ENCODE measurements at regions of chr12 and their contacts with region 1.

Region 1: DNA sequence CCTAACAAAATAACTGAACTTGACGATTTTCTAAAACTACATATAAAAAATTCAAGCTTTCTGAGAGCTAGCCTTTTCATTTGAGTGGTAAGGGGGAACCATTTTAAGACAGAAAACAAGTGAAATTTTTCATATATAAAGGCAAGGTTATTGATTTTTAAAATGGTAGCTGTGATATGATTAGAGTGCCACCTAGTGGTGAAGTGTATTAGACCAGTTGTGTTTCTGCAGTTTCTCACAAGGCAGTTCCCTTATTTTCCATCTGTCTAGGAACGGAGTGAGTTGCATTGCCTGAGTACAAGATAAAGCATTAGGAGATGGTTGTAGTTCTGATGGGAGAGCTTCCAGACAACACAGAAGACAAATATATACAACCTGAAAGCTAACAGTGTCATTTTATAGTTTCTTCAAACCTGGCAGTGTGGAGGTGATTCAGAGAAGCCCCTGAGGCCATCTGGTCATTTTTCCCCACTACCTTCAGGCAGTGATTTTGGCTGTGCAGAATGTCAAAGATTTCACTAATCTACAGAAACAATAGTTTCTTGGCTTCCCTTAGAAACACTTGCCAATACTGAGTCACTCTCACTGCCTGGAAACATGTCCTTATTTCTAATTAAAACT is 180.8 kb downstream of the C12orf50 start:
- DNase-seq: peak; percentile 18 to 45 (median 22)
- ATAC-seq: no peak
- H3K4me3 ChIP-seq: no peak overlapping the region
- H3K27ac ChIP-seq: no peak overlapping the region
- H3K4me1 ChIP-seq: no peaks in the 10 kb centered on the region
- H3K27me3 ChIP-seq: no peaks in the 10 kb centered on the region
- CTCF ChIP-seq: peak in 2 of 3 experiments; percentile 55 to 58; a peak in 4 of 6 replicates
- EP300 ChIP-seq: no peak
- POLR2A ChIP-seq: no peak
- RAD21 ChIP-seq: peak; percentile 69 to 73

Region 2: DNA sequence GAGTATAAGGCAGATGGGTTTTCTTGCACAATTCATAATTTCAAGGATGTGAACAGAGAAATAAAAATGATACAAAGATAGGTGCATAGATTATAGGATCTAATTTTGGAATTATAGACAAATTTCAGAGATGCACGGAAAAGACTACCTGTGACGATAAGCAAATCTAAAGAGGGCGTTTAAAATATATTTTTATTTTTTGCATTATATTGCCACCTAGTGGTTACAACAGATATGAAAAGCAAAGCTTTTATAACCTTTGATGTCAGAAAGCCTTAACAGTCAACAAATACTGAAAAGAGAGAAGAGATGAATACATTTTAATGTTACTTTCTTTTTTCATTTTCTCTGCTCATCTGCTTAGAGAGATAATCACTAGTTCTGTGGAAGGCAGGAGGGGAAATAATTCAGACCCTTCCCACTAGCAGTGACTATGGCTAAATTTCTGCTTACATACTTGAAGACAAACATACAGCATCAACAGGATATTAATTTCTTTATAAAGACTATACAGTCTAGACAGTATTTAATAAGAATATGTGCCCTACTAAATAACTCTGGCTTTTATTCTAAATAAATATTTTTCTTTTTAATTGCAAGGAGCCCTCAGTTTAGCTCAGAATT is 1927.9 kb before region 1 on chr12:
- CTCF ChIA-PET with region 1: no interaction called
- POLR2A ChIA-PET with region 1: no interaction called
- in situ Hi-C with region 1: no loop called
- intact Hi-C with region 1: loop called (anchors 2 kb)
- DNase-seq: peak; percentile 2 to 12 (median 8)
- ATAC-seq: no peak
- H3K4me3 ChIP-seq: no peak overlapping the region
- H3K27ac ChIP-seq: no peak overlapping the region
- H3K4me1 ChIP-seq: no peaks in the 10 kb centered on the region
- H3K27me3 ChIP-seq: no peaks in the 10 kb centered on the region
- CTCF ChIP-seq: peak in 2 of 3 experiments; percentile 4 to 49; a peak in 2 of 6 replicates
- EP300 ChIP-seq: no peak
- POLR2A ChIP-seq: no peak
- RAD21 ChIP-seq: peak; percentile 51 to 66

Region 3: GRCh38 chr12:87995581-87996178 is 147.3 kb after region 1 on chr12:
- CTCF ChIA-PET with region 1: no interaction called
- POLR2A ChIA-PET with region 1: no interaction called
- in situ Hi-C with region 1: no loop called
- intact Hi-C with region 1: loop called (anchors 10 kb)
- DNase-seq: peak; percentile 35 to 70 (median 44)
- ATAC-seq: peak; percentile 95
- H3K4me3 ChIP-seq: no peak overlapping the region
- H3K27ac ChIP-seq: no peak overlapping the region
- H3K4me1 ChIP-seq: no peaks in the 10 kb centered on the region
- H3K27me3 ChIP-seq: no peaks in the 10 kb centered on the region
- CTCF ChIP-seq: peak; percentile 63 to 69 (median 67)
- EP300 ChIP-seq: no peak
- POLR2A ChIP-seq: no peak
- RAD21 ChIP-seq: peak; percentile 70 to 74

Measured in K562 (cell line).